Tibial artery (tissue), 4 donors: ENCODE measurements at regions of chr19 and their contacts with region 1.

Region 1: GRCh38 chr19:3163230-3163886 is 15.2 kb upstream of the S1PR4 start:
- DNase-seq: peak in 1 of 2 donors; percentile 69
- H3K4me3 ChIP-seq: no peak overlapping the region
- H3K27ac ChIP-seq: no peak overlapping the region
- H3K4me1 ChIP-seq: no peaks in the 10 kb centered on the region
- H3K27me3 ChIP-seq: peaks cover 0 to 8% of the 10 kb centered on the region in 2 donors
- CTCF ChIP-seq: peak; percentile 88 to 94

Region 2: DNA sequence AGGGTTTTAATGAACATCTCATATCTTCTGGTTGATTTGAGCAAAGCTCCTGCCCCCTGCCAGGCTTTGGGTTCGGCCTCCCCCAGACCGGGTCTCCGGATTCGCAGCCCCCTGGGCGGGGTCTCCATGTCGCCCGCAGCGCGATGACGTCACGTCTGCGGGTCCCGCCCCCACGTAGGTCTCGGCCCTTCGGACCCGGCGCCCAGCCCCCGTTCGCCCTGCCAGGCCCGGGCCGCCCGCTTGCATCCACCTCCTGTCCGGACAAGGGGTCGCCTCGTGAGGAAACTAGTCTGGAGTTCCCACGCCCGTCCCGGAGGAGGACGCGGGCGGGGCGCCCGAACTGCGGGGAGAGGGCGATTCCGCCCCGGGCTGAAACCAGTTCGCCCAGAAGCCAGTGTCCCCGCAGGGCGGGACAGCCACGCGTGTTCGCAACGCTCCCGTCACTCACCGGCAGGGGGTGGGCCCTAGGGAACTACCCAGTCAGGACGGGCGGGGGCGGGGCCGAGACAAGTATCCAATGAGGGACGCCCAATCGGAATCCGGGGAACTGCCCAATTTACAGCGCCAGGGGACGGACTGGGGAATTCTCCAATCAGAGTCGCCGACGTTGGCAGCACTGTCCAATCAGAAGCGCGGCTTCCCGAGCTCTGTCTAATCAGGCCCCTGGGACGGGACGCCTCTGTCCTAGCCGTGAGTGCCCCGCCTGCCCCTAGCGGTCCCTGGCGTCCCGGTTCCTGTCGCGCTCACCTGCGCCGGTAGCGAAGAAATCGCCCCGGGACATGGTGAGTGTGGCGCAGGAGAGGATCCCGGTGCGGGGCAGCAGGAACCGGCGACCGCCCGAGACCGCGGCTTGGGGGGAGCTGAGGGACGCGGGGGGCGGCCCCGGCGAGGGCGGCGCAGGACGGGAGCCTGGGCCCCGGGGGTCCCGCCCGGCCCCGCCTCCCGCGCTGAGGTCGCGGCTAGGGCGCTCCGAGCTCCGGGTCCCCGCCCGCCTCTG is 322.3 kb before region 1 on chr19 and contains the start of gene ZNF555:
- intact Hi-C with region 1: no loop called
- DNase-seq: peak; percentile 100
- H3K4me3 ChIP-seq: peak within 1 kb of the TSS; percentile 68 to 97
- H3K27ac ChIP-seq: peak within 1 kb of the TSS; percentile 91
- H3K4me1 ChIP-seq: peaks cover 0 to 17% (median 10%) of the 10 kb centered on the region in 4 donors
- H3K27me3 ChIP-seq: no peaks in the 10 kb centered on the region
- CTCF ChIP-seq: peak; percentile 54 to 60

Region 3: GRCh38 chr19:2887391-2887914 is 275.9 kb before region 1 on chr19:
- intact Hi-C with region 1: loop called (anchors 5 kb)
- DNase-seq: peak in 1 of 2 donors; percentile 23
- H3K4me3 ChIP-seq: no peak overlapping the region
- H3K27ac ChIP-seq: no peak overlapping the region
- H3K4me1 ChIP-seq: peaks cover 0 to 5% (median 2%) of the 10 kb centered on the region in 4 donors
- H3K27me3 ChIP-seq: peaks cover 0 to 10% of the 10 kb centered on the region in 2 donors
- CTCF ChIP-seq: peak; percentile 63 to 68

Region 4: GRCh38 chr19:2950286-2951124 is 212.9 kb before region 1 on chr19:
- intact Hi-C with region 1: loop called (anchors 5 kb)
- DNase-seq: peak; percentile 100
- H3K4me3 ChIP-seq: peak overlapping the region; percentile 75 to 95
- H3K27ac ChIP-seq: peak overlapping the region; percentile 94 to 98
- H3K4me1 ChIP-seq: peaks cover 0 to 15% (median 14%) of the 10 kb centered on the region in 4 donors
- H3K27me3 ChIP-seq: peaks cover 0 to 3% of the 10 kb centered on the region in 2 donors
- CTCF ChIP-seq: no peak

Region 5: GRCh38 chr19:3075895-3076431 is 87.4 kb before region 1 on chr19:
- intact Hi-C with region 1: loop called (anchors 1 kb)
- DNase-seq: no peak
- H3K4me3 ChIP-seq: no peak overlapping the region
- H3K27ac ChIP-seq: no peak overlapping the region
- H3K4me1 ChIP-seq: peaks cover 0 to 21% (median 11%) of the 10 kb centered on the region in 4 donors
- H3K27me3 ChIP-seq: no peaks in the 10 kb centered on the region
- CTCF ChIP-seq: peak; percentile 93

Region 6: GRCh38 chr19:3125900-3126524 is 37.3 kb before region 1 on chr19:
- intact Hi-C with region 1: loop called (anchors 5 kb)
- DNase-seq: peak in 1 of 2 donors; percentile 70
- H3K4me3 ChIP-seq: no peak overlapping the region
- H3K27ac ChIP-seq: no peak overlapping the region
- H3K4me1 ChIP-seq: no peaks in the 10 kb centered on the region
- H3K27me3 ChIP-seq: peaks cover 0 to 6% of the 10 kb centered on the region in 2 donors
- CTCF ChIP-seq: peak; percentile 61 to 64

Region 7: DNA sequence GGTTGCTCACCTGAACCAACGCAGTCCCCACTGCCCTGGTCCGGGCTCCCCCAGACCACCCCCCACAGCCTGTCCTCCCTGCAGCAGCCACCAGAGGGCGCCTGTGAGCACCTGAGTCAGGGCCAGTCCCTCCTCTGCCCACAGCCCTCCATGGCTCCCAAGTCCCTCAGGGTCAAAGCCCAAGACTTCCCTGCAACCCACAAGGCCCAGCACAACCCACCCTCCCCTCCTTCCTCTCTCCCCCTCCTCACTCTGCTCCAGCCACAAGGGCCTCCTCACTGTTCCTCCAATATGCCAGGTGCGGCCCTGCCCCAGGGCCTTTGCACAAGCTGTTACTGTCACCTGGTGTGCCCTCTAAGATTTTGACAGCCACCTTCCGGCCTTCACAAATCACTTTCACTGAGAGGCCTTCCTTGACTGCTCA is 16.7 kb before region 1 on chr19:
- intact Hi-C with region 1: no loop called
- DNase-seq: no peak
- H3K4me3 ChIP-seq: no peak overlapping the region
- H3K27ac ChIP-seq: no peak overlapping the region
- H3K4me1 ChIP-seq: no peaks in the 10 kb centered on the region
- H3K27me3 ChIP-seq: peaks cover 0 to 52% of the 10 kb centered on the region in 2 donors
- CTCF ChIP-seq: peak; percentile 36 to 59